ENCODE measurements at regions of chr17 and their contacts with region 1.

Region 1: GRCh38 chr17:61208301-61209105 is 191.1 kb upstream of the TBX2 start:
- DNase-seq: no peak
- H3K4me3 ChIP-seq: peak overlapping the region in 45 of 59 donors; percentile 3 to 53 (median 24)
- H3K27ac ChIP-seq: peak overlapping the region in 57 of 59 donors; percentile 3 to 85 (median 60)
- H3K27me3 ChIP-seq: no peaks in the 10 kb centered on the region
- CTCF ChIP-seq: no peak

Region 2: DNA sequence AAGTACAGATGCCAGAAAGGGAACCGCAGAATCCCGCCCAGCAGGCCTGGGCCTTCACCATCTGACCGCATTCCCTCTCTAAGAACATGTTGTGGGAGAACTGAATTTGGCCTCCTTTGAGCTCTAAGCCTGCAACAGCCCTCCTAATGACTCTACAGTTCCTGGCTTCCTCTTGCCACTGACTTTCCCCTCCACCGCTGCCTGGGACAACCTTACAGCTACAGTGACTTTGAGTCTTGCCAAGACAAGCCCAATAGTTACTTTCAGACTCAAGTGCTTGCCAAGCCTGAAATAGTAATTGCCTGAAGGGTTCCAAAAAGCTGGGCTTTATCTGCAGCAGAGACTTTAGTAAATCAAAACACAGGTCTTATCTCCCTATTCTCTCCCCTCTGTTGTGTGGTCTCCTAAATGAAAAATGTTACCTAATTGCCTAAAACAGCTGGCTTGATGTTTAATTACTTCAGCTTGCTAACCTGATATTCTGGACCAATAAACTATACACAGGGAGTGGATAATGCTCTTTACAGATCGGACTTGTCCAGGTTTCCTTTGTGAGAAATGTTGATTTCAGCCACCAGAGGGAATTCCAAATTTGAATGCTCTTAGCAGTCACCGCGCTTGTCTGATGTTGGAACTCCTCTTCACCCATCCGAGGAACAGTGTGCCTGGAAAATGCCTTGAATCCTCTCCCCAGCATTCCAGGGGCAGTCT is 106.0 kb after region 1 on chr17:
- intact Hi-C with region 1: loop called in 1 of 2 experiments (anchors 10 kb)
- DNase-seq: peak in 3 of 10 donors; percentile 15 to 40 (median 39)
- H3K4me3 ChIP-seq: no peak overlapping the region
- H3K27ac ChIP-seq: peak overlapping the region in 47 of 59 donors; percentile 15 to 80 (median 55)
- H3K27me3 ChIP-seq: no peaks in the 10 kb centered on the region
- CTCF ChIP-seq: peak in 3 of 56 donors; percentile 12 to 28 (median 18)